ENCODE measurements at regions of chr13 and their contacts with region 1.

Region 1: DNA sequence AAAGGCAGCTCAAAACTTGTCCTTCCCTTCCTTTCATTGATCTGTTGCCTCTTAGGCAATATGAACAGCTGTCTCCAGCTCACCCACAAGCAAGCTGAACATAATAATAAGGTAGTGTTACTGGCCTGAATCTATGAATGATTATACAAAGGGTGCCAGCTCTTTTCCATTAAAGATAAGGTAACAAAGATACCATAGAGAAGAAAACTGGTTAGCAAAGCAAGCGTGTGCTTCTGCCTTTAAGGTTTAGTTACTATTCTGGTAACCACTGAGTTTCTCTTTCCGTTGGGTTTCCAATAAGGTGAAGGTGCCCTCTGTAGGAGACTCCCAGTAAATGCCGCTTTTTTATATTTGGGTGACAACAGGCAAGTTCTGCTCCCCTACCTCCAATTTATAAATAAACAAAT is 12.1 kb upstream of the DACH1 start:
- DNase-seq: peak; percentile 37
- H3K4me3 ChIP-seq: peak overlapping the region in 1 of 3 experiments; percentile 15
- H3K27ac ChIP-seq: no peak overlapping the region
- H3K4me1 ChIP-seq: peaks cover 4% of the 10 kb centered on the region
- H3K27me3 ChIP-seq: no peaks in the 10 kb centered on the region
- CTCF ChIP-seq: peak; percentile 36 to 58

Region 2: GRCh38 chr13:71320452-71320851 is 558.7 kb before region 1 on chr13:
- CTCF ChIA-PET with region 1: interaction called, 4 read pairs
- dilution Hi-C with region 1: no loop called
- in situ Hi-C with region 1: no loop called
- intact Hi-C with region 1: loop called (anchors 10 kb)
- DNase-seq: peak; percentile 7
- H3K4me3 ChIP-seq: no peak overlapping the region
- H3K27ac ChIP-seq: no peak overlapping the region
- H3K4me1 ChIP-seq: no peaks in the 10 kb centered on the region
- H3K27me3 ChIP-seq: peaks cover 3% of the 10 kb centered on the region
- CTCF ChIP-seq: peak; percentile 64 to 66